SK-N-SH (cell line): ENCODE measurements at regions of chr19 and their contacts with region 1.

Region 1: GRCh38 chr19:56066152-56067023 is 54.7 kb downstream of the ZNF787 start:
- DNase-seq: peak; percentile 89
- H3K4me3 ChIP-seq: peak overlapping the region; percentile 26 to 54
- H3K27ac ChIP-seq: no peak overlapping the region
- H3K4me1 ChIP-seq: peaks cover 0 to 7% of the 10 kb centered on the region in 2 experiments; a peak in 1 of 4 replicates
- H3K27me3 ChIP-seq: peaks cover 10% of the 10 kb centered on the region; the same call in 1 of the 2 replicates
- CTCF ChIP-seq: peak; percentile 87
- EP300 ChIP-seq: no peak
- RAD21 ChIP-seq: peak; percentile 75

Region 2: GRCh38 chr19:55990804-55991203 is 75.6 kb before region 1 on chr19:
- CTCF ChIA-PET with region 1: no interaction called
- POLR2A ChIA-PET with region 1: no interaction called
- DNase-seq: no peak
- H3K4me3 ChIP-seq: no peak overlapping the region
- H3K27ac ChIP-seq: no peak overlapping the region
- H3K4me1 ChIP-seq: no peaks in the 10 kb centered on the region
- H3K27me3 ChIP-seq: peaks cover 20% of the 10 kb centered on the region
- CTCF ChIP-seq: no peak
- EP300 ChIP-seq: no peak
- RAD21 ChIP-seq: no peak

Region 3: GRCh38 chr19:56053596-56053995 is 12.8 kb before region 1 on chr19:
- CTCF ChIA-PET with region 1: interaction called, 35 read pairs
- POLR2A ChIA-PET with region 1: no interaction called
- DNase-seq: no peak
- H3K4me3 ChIP-seq: no peak overlapping the region
- H3K27ac ChIP-seq: no peak overlapping the region
- H3K4me1 ChIP-seq: no peaks in the 10 kb centered on the region
- H3K27me3 ChIP-seq: peaks cover 22% of the 10 kb centered on the region; the same call in 1 of the 2 replicates
- CTCF ChIP-seq: no peak
- EP300 ChIP-seq: no peak
- RAD21 ChIP-seq: no peak

Region 4: DNA sequence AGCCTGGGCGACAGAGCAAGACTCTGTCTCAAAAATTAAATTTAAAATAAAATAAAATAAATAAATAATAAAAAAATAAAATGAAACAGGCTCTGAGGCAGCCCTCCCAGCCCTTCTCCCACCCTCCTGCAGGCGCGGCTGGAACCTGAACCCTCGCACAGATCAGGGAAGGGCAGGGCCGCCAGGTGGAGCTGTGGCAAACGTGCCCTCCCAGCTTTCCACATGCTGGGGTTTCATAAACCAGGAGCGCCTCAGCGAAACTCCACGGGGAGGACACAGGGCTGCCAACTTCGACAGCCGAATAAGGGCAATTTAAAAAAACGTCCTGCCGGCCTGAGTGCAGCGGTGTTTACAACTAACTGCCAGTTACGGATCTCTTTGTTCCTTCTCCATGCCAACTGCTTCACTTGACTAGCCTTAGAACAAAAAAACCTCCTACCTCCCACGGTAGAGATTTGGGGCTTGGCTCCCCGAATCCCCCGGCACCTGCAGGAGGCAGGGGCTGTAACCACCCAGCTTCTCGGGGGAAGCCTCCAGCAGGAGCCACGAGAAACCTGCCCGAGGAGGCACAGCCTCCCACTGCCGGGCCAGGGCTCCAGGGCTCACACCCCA is 38.8 kb after region 1 on chr19:
- CTCF ChIA-PET with region 1: no interaction called
- POLR2A ChIA-PET with region 1: no interaction called
- DNase-seq: no peak
- H3K4me3 ChIP-seq: no peak overlapping the region; a peak in 1 of 4 replicates
- H3K27ac ChIP-seq: no peak overlapping the region
- H3K4me1 ChIP-seq: peaks cover 2 to 3% of the 10 kb centered on the region in 2 experiments; a peak in 2 of 4 replicates
- H3K27me3 ChIP-seq: no peaks in the 10 kb centered on the region
- CTCF ChIP-seq: peak; percentile 37
- EP300 ChIP-seq: no peak
- RAD21 ChIP-seq: no peak

Region 5: DNA sequence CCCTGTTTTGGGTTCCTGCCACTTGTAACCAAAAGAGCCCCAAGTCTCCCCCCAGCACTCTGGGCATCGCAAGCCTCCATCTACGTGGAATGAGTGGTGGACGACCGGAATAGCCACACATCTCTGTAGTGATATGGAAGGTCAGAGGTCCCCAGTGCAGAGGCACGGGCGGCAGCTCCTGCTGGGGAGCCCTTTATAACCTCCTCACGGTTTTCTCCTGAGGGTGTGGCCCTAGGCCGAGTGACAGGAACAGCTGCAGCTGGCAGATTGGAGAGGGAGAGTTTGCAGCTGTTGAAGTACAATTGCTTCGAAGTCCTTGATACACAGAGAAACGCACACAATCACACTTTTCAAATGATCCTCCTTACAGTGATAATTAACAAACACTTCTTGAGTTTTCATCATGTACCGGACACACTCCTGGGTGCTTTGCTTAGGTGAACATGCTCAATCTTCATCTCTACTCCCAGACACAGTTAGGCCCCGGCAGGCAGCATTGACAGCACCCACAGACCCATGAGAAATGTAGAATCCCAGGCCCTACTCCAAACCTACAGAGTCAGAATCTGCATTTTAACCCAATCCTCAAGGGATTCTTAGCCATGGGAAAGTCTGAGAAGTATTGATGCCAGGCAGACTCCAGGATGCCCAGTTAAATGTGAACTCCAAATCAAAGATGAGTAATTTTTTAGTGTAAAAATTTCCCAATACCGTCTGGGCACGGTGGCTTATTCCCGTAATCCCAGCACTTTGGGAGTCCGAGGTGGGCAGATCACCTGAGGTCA is 59.6 kb after region 1 on chr19:
- CTCF ChIA-PET with region 1: no interaction called
- POLR2A ChIA-PET with region 1: no interaction called
- DNase-seq: no peak
- H3K4me3 ChIP-seq: no peak overlapping the region
- H3K27ac ChIP-seq: no peak overlapping the region
- H3K4me1 ChIP-seq: peaks cover 0 to 5% of the 10 kb centered on the region in 2 experiments; a peak in 1 of 4 replicates
- H3K27me3 ChIP-seq: no peaks in the 10 kb centered on the region
- CTCF ChIP-seq: no peak
- EP300 ChIP-seq: no peak
- RAD21 ChIP-seq: no peak

Region 6: GRCh38 chr19:56170261-56170660 is 103.9 kb after region 1 on chr19:
- CTCF ChIA-PET with region 1: interaction called, 54 read pairs
- POLR2A ChIA-PET with region 1: no interaction called
- DNase-seq: no peak
- H3K4me3 ChIP-seq: no peak overlapping the region
- H3K27ac ChIP-seq: no peak overlapping the region
- H3K4me1 ChIP-seq: no peaks in the 10 kb centered on the region
- H3K27me3 ChIP-seq: peaks cover 37% of the 10 kb centered on the region; the same call in 1 of the 2 replicates
- CTCF ChIP-seq: no peak
- EP300 ChIP-seq: no peak
- RAD21 ChIP-seq: no peak

Region 7: DNA sequence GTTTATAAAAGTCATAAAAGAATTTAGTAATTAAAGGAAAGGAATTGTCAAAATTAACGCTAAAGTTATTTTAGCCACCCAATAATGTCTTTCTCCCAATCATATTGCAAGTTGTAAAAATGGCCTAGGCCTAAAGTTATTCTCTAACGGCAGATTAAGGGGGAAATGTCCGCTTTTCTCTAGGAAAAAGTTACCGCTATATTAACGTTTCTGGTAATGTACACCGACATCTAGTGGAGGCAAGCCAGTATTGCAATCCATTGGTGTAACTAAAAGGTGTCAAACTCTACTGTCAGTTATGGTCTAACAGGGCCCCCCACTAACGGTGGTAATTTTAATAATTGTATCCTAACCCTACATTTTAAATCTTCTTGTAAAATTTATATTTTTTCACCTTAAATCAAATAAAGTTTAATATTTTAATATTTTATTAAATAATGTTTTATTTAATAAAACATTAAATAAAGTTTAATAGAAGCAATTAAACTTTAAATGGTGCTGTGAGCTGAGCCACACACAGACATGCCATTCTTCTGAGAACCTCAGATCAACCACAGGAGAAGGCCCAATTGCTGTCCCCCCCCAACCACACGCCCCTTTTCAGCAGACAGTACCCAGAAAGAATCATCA is 284.1 kb after region 1 on chr19:
- CTCF ChIA-PET with region 1: interaction called, 15 read pairs
- POLR2A ChIA-PET with region 1: no interaction called
- DNase-seq: peak; percentile 55
- H3K4me3 ChIP-seq: no peak overlapping the region
- H3K27ac ChIP-seq: no peak overlapping the region
- H3K4me1 ChIP-seq: no peaks in the 10 kb centered on the region
- H3K27me3 ChIP-seq: no peaks in the 10 kb centered on the region
- CTCF ChIP-seq: peak; percentile 81
- EP300 ChIP-seq: no peak
- RAD21 ChIP-seq: peak; percentile 73